Psoas muscle (tissue), 8 donors: ENCODE measurements at regions of chr4 and their contacts with region 1.

Region 1: DNA sequence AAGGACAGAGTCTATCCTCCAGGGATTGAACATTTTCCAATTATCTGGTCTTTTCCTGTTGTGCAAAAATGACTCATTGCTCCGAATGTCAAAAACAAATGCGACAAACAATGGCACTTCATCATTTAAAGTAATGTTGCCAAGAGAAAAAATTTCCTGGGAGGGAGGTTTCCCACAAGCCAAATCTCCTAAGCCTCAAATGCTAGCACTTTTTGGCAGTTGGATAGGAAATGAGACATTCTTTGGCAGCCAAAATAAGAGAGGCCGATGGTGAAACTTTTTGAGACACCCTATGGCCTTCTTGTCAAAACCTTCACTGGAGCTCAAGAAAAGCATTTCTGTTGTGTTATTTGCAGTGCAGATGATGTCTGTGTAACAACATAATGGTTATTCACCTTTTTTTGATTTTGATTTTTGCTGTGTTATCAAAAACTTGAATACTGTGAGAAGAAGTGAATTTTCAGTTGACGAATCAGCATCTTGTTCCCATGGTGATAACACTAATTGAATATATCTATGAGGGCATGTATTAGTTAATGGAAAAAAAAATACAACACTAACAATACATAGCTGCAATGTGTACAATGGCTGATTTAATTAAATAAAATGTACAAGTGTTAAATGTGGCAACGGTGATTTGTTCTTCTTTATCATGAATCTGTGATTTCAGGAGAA is 333.8 kb downstream of the ANK2 start:
- DNase-seq: no peak
- ATAC-seq: peak; percentile 18 to 69 (median 60)
- H3K4me3 ChIP-seq: no peak overlapping the region
- H3K27ac ChIP-seq: peak overlapping the region; percentile 54
- H3K4me1 ChIP-seq: peaks cover 5% of the 10 kb centered on the region
- H3K27me3 ChIP-seq: no peaks in the 10 kb centered on the region
- CTCF ChIP-seq: no peak

Region 2: DNA sequence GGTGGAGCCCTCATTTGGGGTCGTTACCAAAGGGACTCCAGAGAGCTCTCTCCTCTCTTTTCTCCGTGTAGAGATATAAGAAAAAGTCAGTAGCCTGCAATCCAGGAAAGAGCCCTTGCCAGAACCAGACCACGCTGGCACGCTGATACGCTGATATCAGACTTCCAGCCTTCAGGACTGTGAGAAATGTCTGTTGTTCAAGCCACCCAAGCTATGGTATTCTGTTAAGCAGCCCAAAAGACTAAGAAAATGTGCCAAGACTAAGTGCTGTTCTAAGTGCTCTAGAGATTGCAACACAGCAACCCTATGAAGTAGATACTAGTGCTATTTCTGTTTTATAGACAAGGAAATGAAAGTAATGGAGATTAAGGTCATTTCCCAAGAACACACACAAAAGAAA is 172.6 kb after region 1 on chr4:
- intact Hi-C with region 1: no loop called
- DNase-seq: no peak
- ATAC-seq: peak in 2 of 4 donors; percentile 55 to 56
- H3K4me3 ChIP-seq: no peak overlapping the region
- H3K27ac ChIP-seq: peak overlapping the region; percentile 10
- H3K4me1 ChIP-seq: peaks cover 8% of the 10 kb centered on the region
- H3K27me3 ChIP-seq: no peaks in the 10 kb centered on the region
- CTCF ChIP-seq: no peak

Region 3: DNA sequence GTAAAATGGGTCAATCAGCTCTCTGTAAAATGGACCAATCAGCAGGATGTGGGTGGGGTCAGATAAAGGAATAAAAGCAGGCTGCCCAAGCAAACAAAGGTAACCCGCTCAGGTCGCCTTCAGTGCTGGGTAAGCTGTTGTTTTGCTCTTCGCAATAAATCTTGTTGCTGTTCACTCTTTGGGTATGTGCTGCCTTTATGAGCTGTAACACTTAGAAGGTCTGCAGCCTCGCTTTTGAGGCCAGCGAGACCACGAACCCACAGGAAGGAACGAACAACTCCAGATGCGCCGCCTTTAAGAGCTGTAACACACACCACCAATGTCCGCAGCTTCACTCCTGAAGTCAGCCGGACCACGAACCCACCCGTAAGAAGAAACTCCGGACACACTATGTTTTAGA is 389.8 kb after region 1 on chr4:
- intact Hi-C with region 1: loop called in 1 of 2 experiments (anchors 10 kb)
- DNase-seq: no peak
- ATAC-seq: no peak
- H3K4me3 ChIP-seq: no peak overlapping the region
- H3K27ac ChIP-seq: no peak overlapping the region
- H3K4me1 ChIP-seq: no peaks in the 10 kb centered on the region
- H3K27me3 ChIP-seq: no peaks in the 10 kb centered on the region
- CTCF ChIP-seq: no peak

Region 4: GRCh38 chr4:114547340-114548134 is 1164.3 kb after region 1 on chr4:
- intact Hi-C with region 1: no loop called
- DNase-seq: no peak
- ATAC-seq: no peak
- H3K4me3 ChIP-seq: no peak overlapping the region
- H3K27ac ChIP-seq: no peak overlapping the region
- H3K4me1 ChIP-seq: no peaks in the 10 kb centered on the region
- H3K27me3 ChIP-seq: no peaks in the 10 kb centered on the region
- CTCF ChIP-seq: no peak